H1 (cell line): ENCODE measurements at regions of chr11 and their contacts with region 1.

Region 1: DNA sequence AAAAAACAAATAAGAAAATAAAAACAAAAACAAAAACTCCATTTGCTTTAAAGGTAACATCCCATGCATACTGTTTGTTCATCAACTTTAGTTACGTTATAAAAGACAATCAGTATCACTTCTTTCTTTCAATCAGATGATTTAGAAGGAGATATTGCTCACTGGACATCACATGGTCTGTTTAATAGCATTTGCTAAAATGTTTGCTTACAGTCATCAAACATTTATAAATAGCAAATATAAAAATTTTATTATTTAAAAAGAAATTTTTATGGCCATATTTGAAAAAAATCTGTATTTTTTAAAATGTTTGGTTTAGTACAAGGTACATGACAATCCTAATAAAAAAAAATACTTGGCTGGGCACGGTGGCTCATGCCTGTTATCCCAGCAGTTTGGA is 22.6 kb downstream of the MMP26 start:
- DNase-seq: no peak
- H3K4me3 ChIP-seq: no peak overlapping the region
- H3K27ac ChIP-seq: no peak overlapping the region
- H3K4me1 ChIP-seq: no peaks in the 10 kb centered on the region
- H3K27me3 ChIP-seq: no peaks in the 10 kb centered on the region
- CTCF ChIP-seq: no peak
- EP300 ChIP-seq: no peak
- POLR2A ChIP-seq: no peak
- RAD21 ChIP-seq: no peak

Region 2: DNA sequence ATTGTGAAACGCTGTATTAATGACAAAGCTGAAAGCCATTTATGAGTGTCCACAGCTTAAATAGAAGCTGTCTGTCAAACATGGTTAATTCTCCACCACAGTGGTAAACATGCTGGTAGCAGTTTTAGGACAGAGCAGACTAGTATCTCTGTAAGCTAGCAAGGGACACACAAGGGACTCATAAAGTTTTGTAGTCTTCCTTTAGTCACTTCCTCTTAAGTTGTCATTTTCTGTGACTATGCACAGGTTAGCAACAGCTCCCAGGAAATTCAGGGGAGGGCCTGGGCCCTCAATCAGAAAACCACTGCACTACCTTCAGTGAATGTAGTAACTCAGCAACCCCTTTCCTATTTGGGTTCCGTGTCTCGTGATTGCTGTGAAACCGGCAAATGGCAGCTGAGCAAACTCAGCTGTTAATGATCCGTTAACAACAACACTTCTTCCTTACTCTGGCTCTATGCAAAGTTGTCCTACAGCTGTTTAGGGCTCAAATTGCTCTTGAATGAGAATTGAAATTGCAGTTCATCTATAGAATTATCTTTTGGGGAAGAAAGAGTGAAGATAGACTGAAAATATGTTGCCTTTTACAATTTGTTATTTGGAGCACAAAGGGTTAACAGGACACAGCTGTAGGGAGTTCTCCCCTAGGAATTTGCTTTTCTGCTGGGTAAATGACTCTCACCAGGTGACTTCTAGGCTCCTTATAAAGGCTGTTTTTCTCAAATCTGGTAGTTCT is 22.9 kb before region 1 on chr11 and contains the start of gene MMP26:
- CTCF ChIA-PET with region 1: interaction called, 25 read pairs
- POLR2A ChIA-PET with region 1: no interaction called
- DNase-seq: peak in 1 of 2 experiments; percentile 46
- H3K4me3 ChIP-seq: peak within 1 kb of the TSS in 3 of 4 experiments; percentile 10 to 46 (median 12); a peak in 4 of 8 replicates
- H3K27ac ChIP-seq: peak within 1 kb of the TSS; percentile 25; the same call in 1 of the 2 replicates
- H3K4me1 ChIP-seq: peaks cover 0 to 7% (median 5%) of the 10 kb centered on the region in 4 experiments; a peak in 4 of 7 replicates
- H3K27me3 ChIP-seq: no peaks in the 10 kb centered on the region
- CTCF ChIP-seq: no peak
- EP300 ChIP-seq: no peak; a peak in 1 of 3 replicates
- POLR2A ChIP-seq: no peak
- RAD21 ChIP-seq: no peak
- total RNA-seq, gene MMP26: not detected in 2 replicates

Region 3: GRCh38 chr11:4713241-4713640 is 13.9 kb before region 1 on chr11:
- CTCF ChIA-PET with region 1: interaction called, 14 read pairs
- POLR2A ChIA-PET with region 1: no interaction called
- DNase-seq: no peak
- H3K4me3 ChIP-seq: no peak overlapping the region
- H3K27ac ChIP-seq: no peak overlapping the region
- H3K4me1 ChIP-seq: no peaks in the 10 kb centered on the region; a peak in 2 of 7 replicates
- H3K27me3 ChIP-seq: no peaks in the 10 kb centered on the region
- CTCF ChIP-seq: no peak
- EP300 ChIP-seq: no peak
- POLR2A ChIP-seq: no peak
- RAD21 ChIP-seq: no peak